HepG2 (cell line): ENCODE measurements at regions of chr11 and their contacts with region 1.

Region 1: DNA sequence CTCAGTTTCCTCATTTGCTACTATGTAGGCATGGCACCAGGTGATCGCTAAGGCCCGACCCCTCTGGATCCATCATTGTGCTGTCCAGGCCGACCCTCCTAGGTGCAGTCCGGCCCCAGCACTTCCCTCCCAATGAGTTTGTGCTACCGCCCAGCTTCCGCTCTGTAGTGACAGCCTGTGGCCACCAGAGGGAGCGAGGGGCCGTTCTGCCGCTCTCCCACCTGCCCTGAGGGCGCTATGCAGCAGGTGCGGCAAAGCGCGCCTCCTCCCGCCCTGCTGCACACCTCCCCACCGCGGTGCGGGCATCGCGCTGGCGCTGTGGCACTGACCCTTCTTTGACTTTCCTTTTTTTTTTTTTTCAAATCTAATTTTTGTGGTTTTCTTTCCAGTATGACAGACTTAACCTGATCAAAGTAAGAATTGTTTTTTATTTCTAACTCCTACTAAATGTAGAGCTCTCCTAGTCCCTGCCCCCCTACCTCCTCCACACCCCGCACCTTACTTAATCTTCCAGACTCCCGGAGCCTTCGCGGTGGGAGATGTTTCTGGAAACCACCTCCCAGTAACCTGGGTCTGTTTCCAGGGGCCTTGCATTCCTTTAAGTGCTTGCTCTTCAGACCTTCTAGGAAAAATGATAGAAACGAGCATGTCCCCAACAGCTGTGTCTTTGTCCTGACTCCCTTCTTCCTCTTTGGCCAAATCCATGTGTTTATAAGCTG is 73.7 kb downstream of the SCN3B start:
- DNase-seq: peak; percentile 33
- ATAC-seq: peak; percentile 90
- H3K4me3 ChIP-seq: no peak overlapping the region
- H3K27ac ChIP-seq: no peak overlapping the region
- H3K4me1 ChIP-seq: no peaks in the 10 kb centered on the region
- H3K27me3 ChIP-seq: peaks cover 1 to 21% of the 10 kb centered on the region in 2 experiments
- CTCF ChIP-seq: peak; percentile 89
- EP300 ChIP-seq: no peak
- POLR2A ChIP-seq: no peak
- RAD21 ChIP-seq: peak; percentile 73

Region 2: GRCh38 chr11:123511037-123511870 is 69.5 kb before region 1 on chr11:
- CTCF ChIA-PET with region 1: interaction called, 6 read pairs
- POLR2A ChIA-PET with region 1: no interaction called
- in situ Hi-C with region 1: no loop called
- intact Hi-C with region 1: loop called (anchors 1 kb)
- DNase-seq: peak; percentile 66
- ATAC-seq: peak; percentile 98
- H3K4me3 ChIP-seq: no peak overlapping the region
- H3K27ac ChIP-seq: no peak overlapping the region
- H3K4me1 ChIP-seq: no peaks in the 10 kb centered on the region
- H3K27me3 ChIP-seq: no peaks in the 10 kb centered on the region; a peak in 1 of 5 replicates
- CTCF ChIP-seq: peak; percentile 77
- EP300 ChIP-seq: no peak
- POLR2A ChIP-seq: no peak
- RAD21 ChIP-seq: peak; percentile 32

Region 3: GRCh38 chr11:123640677-123641494 is 60.2 kb after region 1 on chr11:
- CTCF ChIA-PET with region 1: no interaction called
- POLR2A ChIA-PET with region 1: no interaction called
- in situ Hi-C with region 1: no loop called
- intact Hi-C with region 1: loop called (anchors 10 kb)
- DNase-seq: peak; percentile 20
- ATAC-seq: peak; percentile 97
- H3K4me3 ChIP-seq: no peak overlapping the region
- H3K27ac ChIP-seq: no peak overlapping the region
- H3K4me1 ChIP-seq: no peaks in the 10 kb centered on the region
- H3K27me3 ChIP-seq: peaks cover 0 to 24% of the 10 kb centered on the region in 2 experiments; a peak in 2 of 5 replicates
- CTCF ChIP-seq: peak; percentile 84
- EP300 ChIP-seq: no peak
- POLR2A ChIP-seq: no peak
- RAD21 ChIP-seq: peak; percentile 41; the same call in 1 of the 2 replicates

Region 4: DNA sequence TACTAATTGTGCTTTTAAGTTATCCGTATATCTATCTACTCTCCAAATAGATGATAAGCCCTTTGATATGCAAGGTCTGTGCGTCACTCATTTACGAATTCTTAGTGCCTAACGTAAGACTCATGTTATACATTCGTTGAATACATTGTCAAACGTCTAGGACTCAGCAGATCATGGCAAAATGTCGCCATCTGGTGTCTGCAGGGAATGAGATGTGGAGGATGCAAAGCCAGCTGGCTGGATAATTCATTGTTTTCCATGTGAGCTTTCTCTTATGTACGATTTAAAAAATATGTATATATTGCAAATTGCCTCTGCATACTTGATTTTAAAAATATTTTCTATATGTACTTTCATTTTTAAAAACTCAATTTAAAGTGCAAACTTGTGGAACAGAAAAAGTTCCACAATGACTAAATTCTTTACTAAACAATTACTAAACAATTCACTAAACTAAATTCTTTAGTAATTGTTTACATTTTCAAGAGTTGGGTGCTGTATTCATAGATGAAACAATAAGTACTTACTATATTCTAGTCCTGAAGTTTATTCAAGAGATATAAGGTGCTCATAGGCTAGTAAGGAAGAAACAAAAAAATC is 127.0 kb after region 1 on chr11:
- CTCF ChIA-PET with region 1: interaction called, 9 read pairs
- POLR2A ChIA-PET with region 1: no interaction called
- in situ Hi-C with region 1: loop called (anchors 5 kb)
- intact Hi-C with region 1: loop called (anchors 1 kb)
- DNase-seq: peak; percentile 42
- ATAC-seq: peak; percentile 81
- H3K4me3 ChIP-seq: no peak overlapping the region
- H3K27ac ChIP-seq: no peak overlapping the region
- H3K4me1 ChIP-seq: no peaks in the 10 kb centered on the region
- H3K27me3 ChIP-seq: no peaks in the 10 kb centered on the region; a peak in 1 of 5 replicates
- CTCF ChIP-seq: peak; percentile 80
- EP300 ChIP-seq: no peak
- POLR2A ChIP-seq: no peak
- RAD21 ChIP-seq: 0 out of 2 replicates have a peak, but pooled peaks have one; percentile 45